ENCODE measurements at regions of chr6 and their contacts with region 1.

Region 1: GRCh38 chr6:155530219-155530834 is 74.7 kb upstream of the NOX3 start:
- DNase-seq: peak; percentile 31
- H3K4me3 ChIP-seq: no peak overlapping the region
- H3K27ac ChIP-seq: no peak overlapping the region
- H3K4me1 ChIP-seq: peaks cover 12% of the 10 kb centered on the region
- H3K27me3 ChIP-seq: no peaks in the 10 kb centered on the region
- CTCF ChIP-seq: peak; percentile 79 to 81

Region 2: DNA sequence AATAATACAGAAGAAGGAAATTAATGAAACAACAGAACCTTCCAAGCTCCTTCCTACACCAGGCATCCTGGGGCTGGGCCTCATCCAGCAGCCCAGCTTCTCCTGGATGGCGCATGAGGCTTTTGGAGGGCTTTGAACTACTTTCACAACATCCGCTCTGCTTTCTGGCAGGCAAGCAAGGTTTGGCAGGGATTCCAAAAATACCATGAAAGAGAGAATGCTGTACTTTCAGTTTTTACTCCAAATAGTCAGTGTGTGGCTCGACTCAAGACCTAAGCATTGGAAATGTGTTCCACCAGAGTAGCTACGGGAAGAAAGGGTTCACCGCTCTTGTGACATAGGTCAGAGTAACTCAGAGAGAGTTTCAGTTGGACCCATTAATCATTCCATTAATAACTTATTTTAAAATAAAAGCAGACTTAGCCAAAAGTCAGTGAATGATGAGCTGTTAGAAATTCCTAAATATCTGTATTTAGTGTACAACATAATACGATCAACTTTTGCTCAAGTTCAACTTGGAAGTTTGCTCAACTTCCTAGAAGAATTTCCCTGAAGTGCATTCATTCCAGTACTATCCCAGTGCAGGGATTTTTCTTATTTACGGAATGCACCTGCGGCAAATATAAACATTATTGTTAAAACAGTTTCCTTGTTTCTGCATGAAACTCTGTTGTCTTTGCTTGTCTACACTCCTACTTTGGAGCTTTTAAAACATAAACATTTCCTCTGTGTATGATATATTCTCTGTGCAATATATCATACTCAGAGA is 1365.7 kb before region 1 on chr6:
- CTCF ChIA-PET with region 1: no interaction called
- dilution Hi-C with region 1: no loop called
- in situ Hi-C with region 1: no loop called
- intact Hi-C with region 1: no loop called
- DNase-seq: no peak
- H3K4me3 ChIP-seq: no peak overlapping the region
- H3K27ac ChIP-seq: no peak overlapping the region
- H3K4me1 ChIP-seq: no peaks in the 10 kb centered on the region
- H3K27me3 ChIP-seq: peaks cover 3% of the 10 kb centered on the region
- CTCF ChIP-seq: no peak

Region 3: GRCh38 chr6:155340464-155341129 is 189.7 kb before region 1 on chr6:
- CTCF ChIA-PET with region 1: interaction called, 3 read pairs
- dilution Hi-C with region 1: loop called (anchors 5 kb)
- in situ Hi-C with region 1: no loop called
- intact Hi-C with region 1: loop called (anchors 1 kb)
- DNase-seq: peak; percentile 56
- H3K4me3 ChIP-seq: no peak overlapping the region
- H3K27ac ChIP-seq: no peak overlapping the region
- H3K4me1 ChIP-seq: peaks cover 11% of the 10 kb centered on the region
- H3K27me3 ChIP-seq: no peaks in the 10 kb centered on the region
- CTCF ChIP-seq: peak; percentile 38 to 46

Measured in mammary epithelial cell (primary cell).